BJ (cell line): ENCODE measurements at regions of chr19 and their contacts with region 1.

Region 1: GRCh38 chr19:44808463-44809371 is at the start of gene BCAM:
- DNase-seq: no peak
- H3K4me3 ChIP-seq: peak within 1 kb of the TSS; percentile 66
- H3K27me3 ChIP-seq: peaks cover 3% of the 10 kb centered on the region; the same call in 1 of the 2 replicates
- CTCF ChIP-seq: no peak
- polyA plus RNA-seq, gene BCAM: 4.7 and 8.9 TPM in 2 replicates

Region 2: GRCh38 chr19:44782729-44783128 is 26.0 kb before region 1 on chr19:
- CTCF ChIA-PET with region 1: interaction called, 27 read pairs
- POLR2A ChIA-PET with region 1: no interaction called
- DNase-seq: no peak
- H3K4me3 ChIP-seq: no peak overlapping the region
- H3K27me3 ChIP-seq: no peaks in the 10 kb centered on the region
- CTCF ChIP-seq: no peak; the same call in 1 of the 2 replicates

Region 3: GRCh38 chr19:44796701-44797115 is 12.0 kb before region 1 on chr19:
- CTCF ChIA-PET with region 1: interaction called, 11 read pairs
- POLR2A ChIA-PET with region 1: no interaction called
- DNase-seq: no peak
- H3K4me3 ChIP-seq: no peak overlapping the region
- H3K27me3 ChIP-seq: no peaks in the 10 kb centered on the region
- CTCF ChIP-seq: no peak